ENCODE measurements at regions of chr17 and their contacts with region 1.

Region 1: GRCh38 chr17:31167111-31167510 is 72.3 kb downstream of the NF1 start:
- DNase-seq: no peak
- ATAC-seq: peak; percentile 70

Region 2: GRCh38 chr17:31130286-31131224 is 36.6 kb before region 1 on chr17:
- intact Hi-C with region 1: loop called (anchors 5 kb)
- DNase-seq: peak; percentile 79
- ATAC-seq: peak; percentile 96

Measured in Right ventricle myocardium inferior (tissue), 1 donor.